ENCODE measurements at regions of chr12 and their contacts with region 1.

Region 1: DNA sequence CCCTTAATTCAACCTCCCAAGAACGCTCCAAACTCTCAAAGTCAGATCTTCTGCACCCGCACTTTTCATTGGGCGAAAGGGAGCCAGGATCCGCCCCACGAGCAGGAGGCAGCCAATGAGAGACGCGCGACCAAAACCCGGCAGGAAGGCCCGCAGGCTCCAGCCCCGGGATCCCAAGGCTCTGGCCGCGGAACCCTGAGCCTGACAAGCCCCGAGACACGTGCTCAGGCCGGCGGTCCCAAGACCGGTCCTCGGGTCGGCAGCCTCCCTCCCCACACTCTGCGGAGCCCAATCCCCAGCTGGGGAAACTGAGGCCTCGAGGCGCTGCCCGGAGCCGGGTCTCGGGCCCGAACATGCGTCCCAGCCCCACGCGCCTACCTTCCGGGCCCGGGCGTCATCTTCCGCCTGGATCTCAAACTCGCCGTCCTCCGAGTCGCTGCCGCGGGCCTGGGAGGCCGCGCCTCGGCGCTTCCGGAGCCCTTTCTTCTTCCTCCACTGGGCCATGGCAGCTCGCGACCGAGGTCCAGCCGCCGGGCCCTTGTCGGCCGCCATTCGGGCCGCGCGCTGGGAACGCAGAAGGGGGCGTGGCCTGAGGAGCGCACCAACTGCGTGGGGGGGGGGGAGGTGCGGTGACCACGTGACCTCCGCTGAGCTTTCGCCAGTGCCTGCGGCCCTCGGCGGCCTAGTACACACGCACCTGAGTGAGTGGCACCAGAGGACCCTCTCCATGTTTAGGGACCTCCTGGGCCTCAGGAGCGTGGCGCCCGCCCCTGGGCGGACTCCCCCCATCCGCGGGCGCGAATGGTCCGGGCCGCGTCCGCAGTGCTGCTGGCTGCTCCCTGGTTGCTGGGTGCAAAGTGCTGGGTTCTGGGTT is at the starts of genes DDX54 and RITA1:
- DNase-seq: peak; percentile 75 to 94 (median 82)
- ATAC-seq: peak; percentile 81
- H3K4me3 ChIP-seq: peak within 1 kb of the TSS; percentile 94
- H3K4me3 Mint-ChIP-seq: peak within 1 kb of the TSS; percentile 97
- H3K27ac ChIP-seq: peak within 1 kb of the TSS; percentile 95 to 96
- H3K27ac Mint-ChIP-seq: peak within 1 kb of the TSS; percentile 99
- H3K4me1 ChIP-seq: peaks cover 52% of the 10 kb centered on the region
- H3K4me1 Mint-ChIP-seq: peaks cover 40% of the 10 kb centered on the region
- H3K27me3 ChIP-seq: no peaks in the 10 kb centered on the region
- H3K27me3 Mint-ChIP-seq: no peaks in the 10 kb centered on the region
- CTCF ChIP-seq: no peak
- total RNA-seq, gene DDX54: 56.8 to 61.1 TPM
- total RNA-seq, gene RITA1: 2.9 to 3.3 TPM

Region 2: GRCh38 chr12:111685744-111686517 is 1499.2 kb before region 1 on chr12 and contains the starts of genes ACAD10 and BRAP:
- CTCF ChIA-PET with region 1: no interaction called
- POLR2A ChIA-PET with region 1: no interaction called
- intact Hi-C with region 1: loop called in 1 of 2 experiments (anchors 10 kb)
- DNase-seq: peak; percentile 86 to 97 (median 92)
- ATAC-seq: peak; percentile 83
- H3K4me3 ChIP-seq: peak within 1 kb of the TSS; percentile 92
- H3K4me3 Mint-ChIP-seq: peak within 1 kb of the TSS; percentile 95
- H3K27ac ChIP-seq: peak within 1 kb of the TSS; percentile 46 to 76
- H3K27ac Mint-ChIP-seq: peak within 1 kb of the TSS; percentile 86
- H3K4me1 ChIP-seq: peaks cover 27% of the 10 kb centered on the region
- H3K4me1 Mint-ChIP-seq: peaks cover 46% of the 10 kb centered on the region
- H3K27me3 ChIP-seq: no peaks in the 10 kb centered on the region
- H3K27me3 Mint-ChIP-seq: no peaks in the 10 kb centered on the region
- CTCF ChIP-seq: no peak
- total RNA-seq, gene ACAD10: 15.8 to 17.4 TPM
- total RNA-seq, gene BRAP: 22.4 to 25.8 TPM

Region 3: DNA sequence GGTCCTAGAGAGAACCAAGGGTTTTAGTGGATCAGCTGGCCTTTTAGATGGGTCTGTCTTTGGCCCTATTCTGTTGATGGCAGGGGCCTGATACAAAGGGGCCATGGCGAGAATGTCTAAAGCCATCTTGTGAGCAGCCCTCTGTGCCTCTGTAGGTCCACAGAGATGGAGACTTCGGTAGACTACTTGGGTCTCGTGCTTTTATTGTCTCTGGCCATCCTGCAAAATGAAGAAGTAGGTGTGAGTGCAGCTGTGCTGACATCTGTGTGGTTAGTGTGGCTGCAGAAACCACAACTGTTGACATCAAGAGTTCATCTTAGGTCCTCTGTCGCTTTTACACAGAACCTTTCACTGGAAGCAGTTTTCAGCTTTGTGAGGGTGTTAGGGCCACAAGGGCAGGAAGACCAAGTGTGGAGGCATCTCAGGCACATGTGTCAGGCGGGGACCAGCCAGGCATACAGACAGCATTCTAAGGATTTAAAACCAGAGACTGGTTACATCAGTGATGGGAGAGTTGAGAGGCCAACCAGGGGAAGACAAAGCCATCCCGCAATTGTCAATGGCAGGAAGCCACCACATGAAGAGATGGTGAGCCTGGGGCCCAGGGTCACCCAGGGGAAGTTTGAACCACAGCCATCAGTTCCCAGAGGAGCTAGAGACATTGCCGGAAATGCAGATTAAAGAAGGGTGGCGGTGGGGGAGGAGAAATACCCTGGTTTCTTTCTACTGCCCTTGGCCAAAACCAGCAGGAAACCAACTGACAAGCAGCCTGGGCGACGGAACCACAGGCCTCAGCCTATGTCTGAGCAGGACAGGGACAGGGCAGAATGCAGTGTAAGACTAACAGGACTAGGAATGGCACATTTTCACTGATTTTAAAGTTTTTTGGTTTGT is 23.2 kb after region 1 on chr12:
- CTCF ChIA-PET with region 1: no interaction called
- POLR2A ChIA-PET with region 1: interaction called, 8 read pairs
- intact Hi-C with region 1: loop called in 1 of 2 experiments (anchors 2 kb)
- DNase-seq: peak in 11 of 14 experiments; percentile 11 to 88 (median 39)
- ATAC-seq: peak; percentile 75
- H3K4me3 ChIP-seq: no peak overlapping the region
- H3K4me3 Mint-ChIP-seq: peak overlapping the region; percentile 75
- H3K27ac ChIP-seq: peak overlapping the region; percentile 57 to 59
- H3K27ac Mint-ChIP-seq: peak overlapping the region; percentile 82
- H3K4me1 ChIP-seq: peaks cover 44% of the 10 kb centered on the region
- H3K4me1 Mint-ChIP-seq: peaks cover 41% of the 10 kb centered on the region
- H3K27me3 ChIP-seq: no peaks in the 10 kb centered on the region
- H3K27me3 Mint-ChIP-seq: no peaks in the 10 kb centered on the region
- CTCF ChIP-seq: no peak

Region 4: GRCh38 chr12:113232840-113233585 is 47.9 kb after region 1 on chr12:
- CTCF ChIA-PET with region 1: interaction called, 7 read pairs
- POLR2A ChIA-PET with region 1: interaction called, 3 read pairs
- intact Hi-C with region 1: loop called in 1 of 2 experiments (anchors 2 kb)
- DNase-seq: peak; percentile 46 to 90 (median 72)
- ATAC-seq: peak; percentile 96
- H3K4me3 ChIP-seq: peak overlapping the region; percentile 39
- H3K4me3 Mint-ChIP-seq: peak overlapping the region; percentile 93
- H3K27ac ChIP-seq: peak overlapping the region in 1 of 2 donors; percentile 46
- H3K27ac Mint-ChIP-seq: peak overlapping the region; percentile 80
- H3K4me1 ChIP-seq: peaks cover 65% of the 10 kb centered on the region
- H3K4me1 Mint-ChIP-seq: peaks cover 63% of the 10 kb centered on the region
- H3K27me3 ChIP-seq: no peaks in the 10 kb centered on the region
- H3K27me3 Mint-ChIP-seq: no peaks in the 10 kb centered on the region
- CTCF ChIP-seq: peak; percentile 32

Region 5: DNA sequence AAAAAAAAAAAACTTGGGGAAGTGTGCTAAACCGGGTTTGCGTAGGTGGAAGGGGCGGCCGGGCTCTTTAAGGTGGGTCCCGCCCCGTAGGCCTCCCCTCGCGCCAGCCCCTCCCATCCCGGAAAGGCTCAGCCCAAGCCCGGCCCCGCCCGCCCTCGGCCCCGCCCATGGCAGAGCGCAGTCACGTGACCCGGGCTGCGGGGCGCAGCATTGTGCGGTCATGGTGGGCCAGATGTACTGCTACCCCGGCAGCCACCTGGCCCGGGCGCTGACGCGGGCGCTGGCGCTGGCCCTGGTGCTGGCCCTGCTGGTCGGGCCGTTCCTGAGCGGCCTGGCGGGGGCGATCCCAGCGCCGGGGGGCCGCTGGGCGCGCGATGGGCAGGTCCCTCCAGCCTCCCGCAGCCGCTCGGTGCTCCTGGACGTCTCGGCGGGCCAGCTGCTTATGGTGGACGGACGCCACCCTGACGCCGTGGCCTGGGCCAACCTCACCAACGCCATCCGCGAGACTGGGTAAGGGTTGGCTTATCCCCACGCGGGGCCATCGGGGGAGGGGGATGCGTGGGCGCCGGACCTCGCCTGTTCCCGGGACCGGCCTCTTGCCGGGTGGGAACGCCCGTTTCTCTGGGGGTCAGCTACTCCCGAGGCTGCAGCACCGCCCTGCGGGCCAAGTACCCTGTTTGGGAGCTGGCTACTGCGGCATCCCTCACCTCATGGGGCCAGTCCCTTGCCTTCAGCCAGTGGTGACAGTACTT is 173.4 kb after region 1 on chr12 and contains the start of gene PLBD2:
- CTCF ChIA-PET with region 1: no interaction called
- POLR2A ChIA-PET with region 1: no interaction called
- intact Hi-C with region 1: loop called in 1 of 2 experiments (anchors 5 kb)
- DNase-seq: peak; percentile 91 to 98 (median 94)
- ATAC-seq: peak; percentile 92
- H3K4me3 ChIP-seq: peak within 1 kb of the TSS; percentile 85
- H3K4me3 Mint-ChIP-seq: peak within 1 kb of the TSS; percentile 93
- H3K27ac ChIP-seq: peak within 1 kb of the TSS; percentile 67 to 82
- H3K27ac Mint-ChIP-seq: peak within 1 kb of the TSS; percentile 95
- H3K4me1 ChIP-seq: peaks cover 22% of the 10 kb centered on the region
- H3K4me1 Mint-ChIP-seq: peaks cover 24% of the 10 kb centered on the region
- H3K27me3 ChIP-seq: no peaks in the 10 kb centered on the region
- H3K27me3 Mint-ChIP-seq: no peaks in the 10 kb centered on the region
- CTCF ChIP-seq: no peak
- total RNA-seq, gene PLBD2: 10.4 to 12.2 TPM